Activated CD8-positive, alpha-beta T cell treated with anti-CD3 and anti-CD28 coated beads for 36 hours (primary cell): ENCODE measurements at regions of chr15 and their contacts with region 1.

Region 1: DNA sequence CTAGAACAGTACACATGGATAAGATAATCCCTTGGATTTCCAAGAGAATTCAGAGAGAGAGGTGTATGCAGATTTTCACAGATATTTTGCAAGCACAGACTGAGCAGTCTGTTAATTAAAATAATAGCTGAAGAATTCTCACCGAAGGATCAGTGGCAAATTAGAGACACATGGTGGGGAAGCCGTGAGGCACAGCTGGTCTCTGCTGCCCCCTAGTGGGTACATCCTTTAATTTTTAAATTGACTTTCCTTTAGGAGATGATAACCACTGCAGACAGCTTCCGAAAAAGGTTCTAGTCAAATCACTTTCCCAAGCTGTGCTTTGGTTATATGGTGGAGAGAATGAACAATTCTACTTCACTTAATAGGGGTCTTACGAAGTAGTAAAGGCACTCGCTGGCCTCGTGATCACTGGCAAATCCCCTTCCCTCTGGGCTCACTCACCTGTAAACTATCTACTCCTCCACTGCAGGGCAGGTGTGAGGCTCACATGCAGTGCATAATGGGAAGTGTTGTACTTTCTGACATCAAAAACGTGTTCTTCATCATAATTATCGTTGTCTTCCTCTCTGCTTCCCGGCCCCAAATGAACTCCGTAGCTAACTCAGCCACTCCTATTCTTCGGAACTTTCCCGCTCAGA is 19.5 kb downstream of the MESD start:
- DNase-seq: peak; percentile 74
- ATAC-seq: peak; percentile 65
- H3K4me3 Mint-ChIP-seq: no peak overlapping the region
- H3K27ac Mint-ChIP-seq: no peak overlapping the region
- H3K4me1 Mint-ChIP-seq: peaks cover 8% of the 10 kb centered on the region
- H3K27me3 Mint-ChIP-seq: no peaks in the 10 kb centered on the region
- CTCF ChIP-seq: peak; percentile 91

Region 2: GRCh38 chr15:80455668-80456442 is 514.3 kb before region 1 on chr15:
- CTCF ChIA-PET with region 1: interaction called, 15 read pairs
- POLR2A ChIA-PET with region 1: no interaction called
- intact Hi-C with region 1: loop called (anchors 5 kb)
- DNase-seq: peak; percentile 63
- ATAC-seq: peak; percentile 80
- H3K4me3 Mint-ChIP-seq: no peak overlapping the region
- H3K27ac Mint-ChIP-seq: no peak overlapping the region
- H3K4me1 Mint-ChIP-seq: no peaks in the 10 kb centered on the region
- H3K27me3 Mint-ChIP-seq: peaks cover 8% of the 10 kb centered on the region
- CTCF ChIP-seq: peak; percentile 93

Region 3: GRCh38 chr15:80804965-80805495 is 165.1 kb before region 1 on chr15:
- CTCF ChIA-PET with region 1: interaction called, 16 read pairs
- POLR2A ChIA-PET with region 1: no interaction called
- intact Hi-C with region 1: no loop called
- DNase-seq: peak; percentile 49
- ATAC-seq: peak; percentile 48
- H3K4me3 Mint-ChIP-seq: no peak overlapping the region
- H3K27ac Mint-ChIP-seq: peak overlapping the region; percentile 4
- H3K4me1 Mint-ChIP-seq: peaks cover 25% of the 10 kb centered on the region
- H3K27me3 Mint-ChIP-seq: no peaks in the 10 kb centered on the region
- CTCF ChIP-seq: no peak

Region 4: DNA sequence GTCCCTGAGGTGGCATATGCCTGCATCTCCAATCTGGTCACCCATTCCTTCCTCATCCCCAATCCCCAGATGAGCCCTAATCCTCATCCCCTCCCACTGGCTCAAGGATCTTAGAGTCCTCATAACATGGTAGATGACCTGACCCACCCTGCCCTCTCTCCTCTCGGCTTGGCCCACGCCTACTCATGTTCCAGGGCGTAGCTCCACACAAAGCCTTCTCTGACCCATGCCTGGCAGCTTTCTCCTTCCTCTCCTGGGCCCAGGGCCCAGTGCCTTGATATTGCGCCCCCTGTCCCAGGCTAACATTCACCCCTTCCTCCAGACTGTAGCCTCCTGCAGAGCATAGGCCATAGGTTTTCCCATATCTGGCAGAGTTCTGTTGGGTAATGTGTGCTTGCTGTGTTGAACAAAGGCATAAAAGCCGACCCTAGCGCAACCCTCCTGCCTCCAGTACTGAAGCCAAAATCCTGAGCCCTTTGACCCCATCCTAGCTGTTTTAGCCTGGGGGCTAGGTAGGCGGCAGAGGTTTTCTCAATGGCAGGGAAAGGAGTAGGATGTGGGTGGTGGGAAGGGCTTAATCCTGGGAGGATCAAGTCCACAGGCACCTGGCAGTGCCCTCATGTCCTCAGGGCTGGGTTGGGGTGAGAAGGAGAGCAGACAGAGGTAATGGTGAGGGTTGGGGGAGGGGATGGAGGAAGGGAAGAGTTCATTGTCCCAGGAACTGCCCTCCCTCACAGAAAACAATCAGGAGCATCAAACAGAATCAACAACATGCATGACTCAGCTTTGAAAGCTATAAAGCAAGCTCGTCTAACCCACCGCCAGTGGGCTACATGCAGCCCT is 16.0 kb before region 1 on chr15:
- CTCF ChIA-PET with region 1: interaction called, 29 read pairs
- POLR2A ChIA-PET with region 1: no interaction called
- intact Hi-C with region 1: no loop called
- DNase-seq: no peak
- ATAC-seq: no peak
- H3K4me3 Mint-ChIP-seq: no peak overlapping the region
- H3K27ac Mint-ChIP-seq: no peak overlapping the region
- H3K4me1 Mint-ChIP-seq: peaks cover 13% of the 10 kb centered on the region
- H3K27me3 Mint-ChIP-seq: no peaks in the 10 kb centered on the region
- CTCF ChIP-seq: no peak